Spleen (tissue), 13 donors: ENCODE measurements at regions of chr13 and their contacts with region 1.

Region 1: GRCh38 chr13:108322206-108322824 is 52.8 kb downstream of the TNFSF13B start:
- DNase-seq: no peak
- H3K4me3 ChIP-seq: no peak overlapping the region
- H3K27ac ChIP-seq: peak overlapping the region in 2 of 8 donors; percentile 48 to 81
- H3K4me1 ChIP-seq: peaks cover 0 to 38% (median 12%) of the 10 kb centered on the region in 6 donors
- H3K27me3 ChIP-seq: peaks cover 0 to 1% (median 0%) of the 10 kb centered on the region in 7 donors
- CTCF ChIP-seq: peak; percentile 56 to 86 (median 73)
- POLR2A ChIP-seq: no peak

Region 2: GRCh38 chr13:108049211-108049610 is 273.1 kb before region 1 on chr13:
- intact Hi-C with region 1: no loop called
- DNase-seq: no peak
- H3K4me3 ChIP-seq: no peak overlapping the region
- H3K27ac ChIP-seq: no peak overlapping the region
- H3K4me1 ChIP-seq: no peaks in the 10 kb centered on the region
- H3K27me3 ChIP-seq: no peaks in the 10 kb centered on the region
- CTCF ChIP-seq: no peak
- POLR2A ChIP-seq: no peak

Region 3: GRCh38 chr13:108096296-108096915 is 225.9 kb before region 1 on chr13:
- intact Hi-C with region 1: no loop called
- DNase-seq: no peak
- H3K4me3 ChIP-seq: no peak overlapping the region
- H3K27ac ChIP-seq: no peak overlapping the region
- H3K4me1 ChIP-seq: no peaks in the 10 kb centered on the region
- H3K27me3 ChIP-seq: no peaks in the 10 kb centered on the region
- CTCF ChIP-seq: no peak
- POLR2A ChIP-seq: no peak

Region 4: DNA sequence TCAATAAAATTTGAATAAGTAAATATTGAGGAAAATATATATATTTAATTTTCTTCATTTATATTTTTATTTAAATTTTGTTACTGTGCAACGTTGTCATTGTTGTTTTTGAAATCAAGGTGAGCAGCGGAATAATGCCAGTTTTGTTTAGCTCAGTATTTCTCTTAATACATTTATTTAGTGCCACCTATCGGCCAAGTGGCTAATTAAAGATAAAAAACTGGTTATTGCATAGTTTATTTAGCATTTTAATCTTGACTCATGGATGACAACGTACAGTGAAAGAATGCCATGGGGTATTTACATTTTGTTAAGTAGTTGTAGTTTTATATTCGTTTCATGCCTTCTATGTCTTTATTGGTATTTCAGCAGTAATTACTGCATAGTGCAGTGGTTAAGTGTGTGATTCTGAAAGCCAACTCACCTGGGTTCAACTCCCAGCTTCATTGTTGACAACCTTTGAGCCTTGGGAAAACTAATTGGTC is 572.9 kb after region 1 on chr13:
- intact Hi-C with region 1: loop called (anchors 5 kb)
- DNase-seq: no peak
- H3K4me3 ChIP-seq: no peak overlapping the region
- H3K27ac ChIP-seq: no peak overlapping the region
- H3K4me1 ChIP-seq: peaks cover 0 to 9% (median 2%) of the 10 kb centered on the region in 6 donors
- H3K27me3 ChIP-seq: peaks cover 0 to 10% (median 0%) of the 10 kb centered on the region in 7 donors
- CTCF ChIP-seq: peak in 9 of 11 experiments; percentile 15 to 59 (median 47)
- POLR2A ChIP-seq: no peak